ENCODE measurements at regions of chr7 and their contacts with region 1.

Region 1: GRCh38 chr7:45111298-45112223 is at the start of gene TBRG4:
- DNase-seq: peak; percentile 96
- H3K4me3 Mint-ChIP-seq: peak within 1 kb of the TSS; percentile 85
- H3K27ac Mint-ChIP-seq: peak within 1 kb of the TSS; percentile 89
- H3K4me1 Mint-ChIP-seq: peaks cover 40% of the 10 kb centered on the region
- H3K27me3 Mint-ChIP-seq: no peaks in the 10 kb centered on the region
- total RNA-seq, gene TBRG4: 127 to 136 TPM

Region 2: DNA sequence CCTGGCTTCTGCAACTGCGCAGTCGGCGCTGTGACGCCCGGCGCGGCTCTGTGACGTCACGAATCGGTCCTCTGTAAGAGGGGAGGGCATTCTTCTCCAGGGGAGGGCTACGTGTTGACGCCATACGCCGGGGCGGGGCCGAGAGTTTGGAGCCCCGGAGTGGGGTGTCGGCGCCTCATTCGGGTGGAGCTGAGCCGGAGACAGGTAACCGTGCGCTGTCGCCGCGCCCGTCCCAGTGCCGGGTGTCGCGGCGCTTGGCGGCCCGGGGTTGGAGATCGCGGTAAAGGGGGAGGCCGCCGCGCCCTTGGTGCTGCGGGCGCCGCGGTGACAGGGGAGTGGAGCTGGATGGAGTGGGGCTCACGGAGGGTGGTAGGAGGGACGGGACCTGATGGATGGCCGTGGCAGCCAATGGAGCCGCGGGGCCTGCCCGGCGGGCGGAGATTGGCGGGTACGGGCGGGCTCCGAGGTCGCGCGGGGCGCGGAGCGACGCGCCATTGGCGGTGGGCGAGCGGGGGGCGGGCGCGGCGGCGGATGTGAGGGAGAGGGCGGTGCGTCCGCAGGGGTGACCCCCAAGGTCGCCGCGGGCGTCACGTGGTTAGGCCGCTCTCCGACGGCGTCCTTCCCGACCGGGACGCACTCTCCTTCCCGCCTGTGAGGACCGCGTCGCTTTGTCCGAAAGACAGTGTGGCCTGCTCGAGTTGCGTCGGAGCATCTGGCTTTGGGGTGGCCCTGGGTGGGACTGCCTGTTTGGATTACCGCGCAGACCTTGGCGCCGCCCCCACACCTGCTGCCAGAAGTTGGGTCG is 504.9 kb before region 1 on chr7 and contains the start of gene OGDH:
- CTCF ChIA-PET with region 1: no interaction called
- intact Hi-C with region 1: loop called (anchors 1 kb)
- DNase-seq: peak; percentile 100
- H3K4me3 Mint-ChIP-seq: peak within 1 kb of the TSS; percentile 96
- H3K27ac Mint-ChIP-seq: peak within 1 kb of the TSS; percentile 97
- H3K4me1 Mint-ChIP-seq: peaks cover 31% of the 10 kb centered on the region
- H3K27me3 Mint-ChIP-seq: no peaks in the 10 kb centered on the region
- total RNA-seq, gene OGDH: 73.9 to 78.4 TPM

Region 3: DNA sequence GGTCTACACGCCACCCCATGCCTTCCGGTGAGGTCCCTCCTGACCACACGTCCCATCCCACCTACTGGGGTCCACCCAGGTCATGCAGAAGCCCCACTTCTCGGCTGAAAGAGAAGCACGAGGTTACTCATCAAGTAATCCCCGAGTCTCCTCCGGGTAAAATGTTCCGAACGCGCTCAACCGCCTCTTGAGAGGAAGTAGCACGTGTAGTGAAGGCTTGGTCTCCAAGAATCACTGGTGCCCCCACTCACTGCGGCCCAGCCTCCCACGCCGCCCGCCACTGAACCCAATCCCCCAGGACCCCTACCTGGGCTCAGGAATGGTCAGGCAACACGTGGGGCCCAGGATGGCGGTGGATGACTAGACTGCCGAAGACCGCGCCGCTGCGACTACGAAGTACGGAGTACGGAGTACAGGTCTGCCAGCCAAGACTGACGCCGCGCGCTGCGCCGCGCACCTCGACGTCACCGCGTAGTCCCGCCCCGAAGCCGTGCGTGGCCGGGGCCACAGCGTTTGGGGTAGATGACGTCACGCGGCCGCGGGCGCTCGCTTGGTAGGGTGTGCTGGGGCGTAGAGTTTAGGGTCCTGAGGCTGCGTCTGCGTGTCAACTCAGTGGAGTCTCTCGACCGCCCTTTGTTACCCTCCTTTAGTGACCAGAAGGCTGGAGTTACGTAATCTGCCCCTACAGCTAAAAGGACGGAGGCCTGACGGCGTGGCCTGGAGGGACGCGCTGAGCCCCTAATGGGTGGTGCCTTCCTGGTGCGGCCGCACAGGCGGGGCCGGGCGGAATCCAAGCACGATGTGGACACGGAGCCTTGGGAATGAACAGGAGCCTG is 125.1 kb before region 1 on chr7:
- CTCF ChIA-PET with region 1: interaction called, 4 read pairs
- intact Hi-C with region 1: loop called (anchors 1 kb)
- DNase-seq: peak; percentile 96
- H3K4me3 Mint-ChIP-seq: peak overlapping the region; percentile 99
- H3K27ac Mint-ChIP-seq: peak overlapping the region; percentile 99
- H3K4me1 Mint-ChIP-seq: peaks cover 43% of the 10 kb centered on the region
- H3K27me3 Mint-ChIP-seq: no peaks in the 10 kb centered on the region

Region 4: DNA sequence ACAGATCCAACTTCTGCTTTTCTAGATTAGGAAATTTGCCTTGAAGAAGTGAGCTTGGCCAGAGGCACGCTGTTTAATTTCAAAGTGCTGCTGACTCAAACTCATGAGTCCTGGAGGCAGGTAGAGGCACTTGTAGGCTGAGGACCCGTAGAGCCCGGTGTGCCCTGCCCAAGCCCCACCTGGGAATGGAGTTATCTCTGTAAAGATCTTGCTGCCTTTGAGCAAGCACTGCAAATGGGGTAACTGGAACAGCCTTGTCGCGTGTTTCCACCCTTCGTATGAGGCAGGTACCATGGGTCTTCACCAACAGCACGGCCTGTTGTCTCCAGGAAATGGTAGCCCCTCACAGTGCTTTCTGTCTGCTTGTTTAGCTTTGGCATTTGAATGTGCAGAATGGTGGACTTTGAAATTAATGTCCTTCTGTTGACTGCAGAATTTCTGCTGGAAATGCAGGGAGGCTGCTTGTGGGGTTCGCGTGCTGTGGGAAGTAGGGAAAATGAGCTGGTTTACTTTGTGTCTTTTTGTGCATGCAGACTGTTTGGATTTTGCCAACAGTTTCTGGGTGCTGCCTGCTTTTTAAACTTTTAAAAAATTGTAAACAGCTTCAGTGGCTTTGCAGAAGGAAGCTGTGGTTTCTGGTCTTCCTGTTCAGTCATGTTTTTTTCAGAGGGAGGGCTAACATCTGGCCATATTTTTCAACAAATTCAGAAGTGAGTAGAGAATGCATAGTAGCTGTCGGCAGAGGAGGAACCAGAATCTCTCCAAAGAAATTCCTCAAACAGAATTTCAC is 84.4 kb before region 1 on chr7:
- CTCF ChIA-PET with region 1: no interaction called
- intact Hi-C with region 1: loop called (anchors 1 kb)
- DNase-seq: peak; percentile 29
- H3K4me3 Mint-ChIP-seq: peak overlapping the region; percentile 65
- H3K27ac Mint-ChIP-seq: peak overlapping the region; percentile 82
- H3K4me1 Mint-ChIP-seq: peaks cover 74% of the 10 kb centered on the region
- H3K27me3 Mint-ChIP-seq: no peaks in the 10 kb centered on the region

Region 5: DNA sequence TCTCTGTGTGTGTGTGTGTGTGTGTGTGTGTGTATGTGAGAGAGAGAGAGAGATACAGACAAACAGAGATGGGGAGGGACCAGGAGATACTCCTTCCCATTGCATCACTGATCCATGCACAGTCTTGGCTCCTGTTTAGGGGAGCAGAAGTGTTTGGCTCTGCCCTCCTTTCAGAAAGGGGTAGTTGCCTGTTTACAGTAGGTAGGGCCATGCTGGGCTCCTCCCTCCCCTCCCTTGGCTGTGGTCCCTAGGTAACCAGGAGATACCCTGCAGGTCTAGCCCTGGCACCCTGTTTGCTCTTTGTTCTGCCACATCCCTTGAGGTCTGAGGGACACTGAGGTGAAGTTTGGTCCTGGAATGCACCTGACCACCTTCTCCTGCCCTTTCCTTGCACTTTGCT is 141.3 kb after region 1 on chr7:
- CTCF ChIA-PET with region 1: no interaction called
- intact Hi-C with region 1: no loop called
- DNase-seq: no peak
- H3K4me3 Mint-ChIP-seq: no peak overlapping the region
- H3K27ac Mint-ChIP-seq: no peak overlapping the region
- H3K4me1 Mint-ChIP-seq: no peaks in the 10 kb centered on the region
- H3K27me3 Mint-ChIP-seq: peaks cover 10% of the 10 kb centered on the region

Measured in activated naive CD4-positive, alpha-beta T cell treated with anti-CD3 and anti-CD28 coated beads for 36 hours (primary cell).